Prostate gland (tissue), 2 donors: ENCODE measurements at regions of chr2 and their contacts with region 1.

Region 1: DNA sequence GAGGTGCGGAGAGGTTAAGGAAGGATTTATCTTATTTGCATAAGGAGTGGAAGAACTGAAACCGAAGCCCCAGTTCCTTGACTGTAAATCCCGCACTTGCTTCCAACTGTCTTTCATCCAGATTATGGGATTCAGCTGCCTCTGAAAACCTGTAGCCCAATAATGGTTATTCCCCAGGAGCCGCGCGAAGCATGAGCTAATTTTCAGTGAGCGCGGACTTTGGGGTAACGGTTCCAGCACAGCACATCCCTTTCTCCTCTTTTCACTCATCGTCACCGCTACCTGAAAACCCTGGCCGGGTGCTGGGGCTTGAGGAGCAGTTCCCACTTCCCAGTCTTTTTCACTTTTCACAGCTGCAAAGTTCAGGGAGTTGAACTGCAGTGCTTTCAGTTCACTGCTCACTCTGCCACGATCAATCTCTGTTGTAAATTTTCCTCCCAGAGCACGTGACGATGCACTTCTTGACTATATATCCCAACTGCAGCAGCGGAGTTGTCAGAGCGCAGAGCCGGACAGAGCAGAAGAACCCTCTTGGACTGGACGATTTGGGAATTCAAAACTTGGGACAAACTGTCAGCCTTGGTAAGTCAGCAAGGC is at the start of gene KCNE4:
- DNase-seq: no peak
- H3K4me3 ChIP-seq: peak within 1 kb of the TSS; percentile 17 to 25
- H3K27ac ChIP-seq: peak within 1 kb of the TSS; percentile 59 to 61
- H3K4me1 ChIP-seq: no peaks in the 10 kb centered on the region
- H3K27me3 ChIP-seq: no peaks in the 10 kb centered on the region
- CTCF ChIP-seq: no peak
- POLR2A ChIP-seq: no peak
- total RNA-seq, gene KCNE4: 1.0 to 4.1 TPM

Region 2: DNA sequence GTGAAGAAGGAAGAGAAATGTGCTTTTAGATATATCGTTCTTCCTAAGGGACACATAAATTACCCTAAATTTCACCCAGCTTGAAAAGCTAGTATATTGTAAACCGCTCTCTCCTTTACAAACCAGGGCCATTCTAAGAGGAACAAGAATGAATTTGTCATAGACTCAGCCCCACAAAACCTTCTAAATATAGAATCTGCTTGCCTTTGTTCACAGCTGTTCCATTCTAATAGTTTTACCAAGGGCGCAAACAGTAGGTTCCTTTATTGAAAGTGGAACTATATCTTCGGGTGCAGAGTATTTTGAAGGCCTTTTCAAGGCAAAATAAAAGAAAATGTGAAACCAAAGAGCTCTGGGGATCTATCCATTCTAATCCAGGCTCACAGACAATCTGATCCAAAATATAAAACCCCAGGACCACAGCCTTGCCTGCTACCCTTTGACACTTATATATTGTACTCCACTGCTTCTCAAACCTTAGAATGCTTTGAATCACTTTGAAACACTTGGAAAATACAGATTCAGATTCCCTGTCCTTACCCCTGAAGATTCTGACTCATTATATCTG is 1069.8 kb before region 1 on chr2:
- intact Hi-C with region 1: no loop called
- DNase-seq: no peak
- H3K4me3 ChIP-seq: no peak overlapping the region
- H3K27ac ChIP-seq: no peak overlapping the region
- H3K4me1 ChIP-seq: no peaks in the 10 kb centered on the region
- H3K27me3 ChIP-seq: no peaks in the 10 kb centered on the region
- CTCF ChIP-seq: no peak
- POLR2A ChIP-seq: no peak

Region 3: DNA sequence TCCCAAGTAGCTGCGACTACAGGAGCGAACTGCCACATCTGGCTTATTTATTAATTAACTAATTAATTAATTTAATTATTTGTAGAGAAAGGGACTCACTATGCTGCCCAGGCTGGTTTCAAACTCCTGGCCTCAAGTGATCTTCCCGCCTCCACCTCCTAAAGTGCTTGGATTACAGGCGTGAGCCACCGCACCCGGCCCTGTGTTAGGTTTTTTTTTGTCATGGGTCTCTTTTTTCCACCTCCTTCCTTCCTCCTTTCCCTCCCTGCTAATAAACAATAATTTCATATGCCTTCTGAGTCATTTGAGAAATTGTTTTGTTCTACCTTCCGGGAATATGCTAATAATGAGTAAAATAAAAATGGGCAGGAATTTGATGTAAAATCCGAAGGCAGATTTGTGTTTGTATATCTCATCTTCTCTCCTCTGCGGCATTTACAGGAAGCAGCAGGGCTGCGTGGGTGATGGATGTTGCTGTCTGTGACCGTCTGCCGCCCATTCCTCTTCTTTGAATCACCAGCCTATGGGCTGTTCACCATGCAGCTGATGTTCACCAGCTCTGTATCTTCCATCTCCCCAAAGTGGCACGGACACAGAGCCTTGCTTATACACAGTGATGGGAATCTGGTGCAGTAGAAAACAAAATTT is 101.0 kb before region 1 on chr2:
- intact Hi-C with region 1: no loop called
- DNase-seq: no peak
- H3K4me3 ChIP-seq: no peak overlapping the region
- H3K27ac ChIP-seq: no peak overlapping the region
- H3K4me1 ChIP-seq: no peaks in the 10 kb centered on the region
- H3K27me3 ChIP-seq: no peaks in the 10 kb centered on the region
- CTCF ChIP-seq: no peak
- POLR2A ChIP-seq: no peak

Region 4: GRCh38 chr2:222993920-222994650 is 57.7 kb before region 1 on chr2:
- intact Hi-C with region 1: loop called (anchors 5 kb)
- DNase-seq: peak; percentile 43
- H3K4me3 ChIP-seq: no peak overlapping the region
- H3K27ac ChIP-seq: peak overlapping the region; percentile 59 to 64
- H3K4me1 ChIP-seq: no peaks in the 10 kb centered on the region
- H3K27me3 ChIP-seq: no peaks in the 10 kb centered on the region
- CTCF ChIP-seq: no peak
- POLR2A ChIP-seq: no peak

Region 5: GRCh38 chr2:223101340-223102039 is 49.7 kb after region 1 on chr2:
- intact Hi-C with region 1: loop called (anchors 5 kb)
- DNase-seq: no peak
- H3K4me3 ChIP-seq: no peak overlapping the region
- H3K27ac ChIP-seq: no peak overlapping the region
- H3K4me1 ChIP-seq: no peaks in the 10 kb centered on the region
- H3K27me3 ChIP-seq: no peaks in the 10 kb centered on the region
- CTCF ChIP-seq: peak in 2 of 4 experiments; percentile 16 to 28
- POLR2A ChIP-seq: no peak

Region 6: DNA sequence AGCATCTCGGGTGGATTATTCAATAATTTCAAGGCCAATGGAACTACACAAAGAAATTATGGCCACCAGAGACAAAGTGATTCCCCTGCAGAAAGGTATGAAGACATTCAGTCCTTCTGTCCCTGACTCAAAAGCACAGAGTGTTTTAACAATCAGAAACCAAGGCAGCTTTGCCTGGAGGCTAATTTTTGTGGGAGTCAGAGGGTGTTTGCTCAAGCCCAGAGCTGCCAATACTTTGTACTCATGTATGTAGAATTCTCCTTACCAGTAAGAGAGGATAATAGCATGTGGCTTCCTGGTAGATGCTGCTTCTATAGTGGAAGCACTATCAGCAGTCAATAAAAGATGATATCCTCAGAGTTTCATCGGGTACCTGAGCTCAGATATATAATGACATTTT is 178.6 kb after region 1 on chr2:
- intact Hi-C with region 1: loop called (anchors 5 kb)
- DNase-seq: peak; percentile 80
- H3K4me3 ChIP-seq: no peak overlapping the region
- H3K27ac ChIP-seq: no peak overlapping the region
- H3K4me1 ChIP-seq: no peaks in the 10 kb centered on the region
- H3K27me3 ChIP-seq: no peaks in the 10 kb centered on the region
- CTCF ChIP-seq: no peak
- POLR2A ChIP-seq: no peak